Colonic mucosa (tissue), 4 donors: ENCODE measurements at regions of chr12 and their contacts with region 1.

Region 1: GRCh38 chr12:75505706-75506312 is 5.6 kb downstream of the KRR1 start:
- DNase-seq: no peak
- H3K4me3 ChIP-seq: no peak overlapping the region
- H3K27ac ChIP-seq: no peak overlapping the region
- H3K4me1 ChIP-seq: peaks cover 7% of the 10 kb centered on the region
- H3K27me3 ChIP-seq: no peaks in the 10 kb centered on the region
- CTCF ChIP-seq: peak; percentile 53

Region 2: GRCh38 chr12:75334384-75335030 is 171.3 kb before region 1 on chr12 and contains the start of gene GLIPR1L1:
- intact Hi-C with region 1: loop called (anchors 5 kb)
- DNase-seq: peak; percentile 86
- H3K4me3 ChIP-seq: peak within 1 kb of the TSS; percentile 14
- H3K27ac ChIP-seq: no peak within 1 kb of the TSS
- H3K4me1 ChIP-seq: no peaks in the 10 kb centered on the region
- H3K27me3 ChIP-seq: peaks cover 4% of the 10 kb centered on the region
- CTCF ChIP-seq: peak; percentile 82
- total RNA-seq, gene GLIPR1L1: not detected

Region 3: GRCh38 chr12:76356094-76356493 is 850.3 kb after region 1 on chr12:
- intact Hi-C with region 1: loop called (anchors 10 kb)
- DNase-seq: no peak
- H3K4me3 ChIP-seq: no peak overlapping the region
- H3K27ac ChIP-seq: no peak overlapping the region
- H3K4me1 ChIP-seq: no peaks in the 10 kb centered on the region
- H3K27me3 ChIP-seq: no peaks in the 10 kb centered on the region
- CTCF ChIP-seq: no peak

Region 4: GRCh38 chr12:76450690-76451089 is 944.9 kb after region 1 on chr12:
- intact Hi-C with region 1: no loop called
- DNase-seq: no peak
- H3K4me3 ChIP-seq: no peak overlapping the region
- H3K27ac ChIP-seq: no peak overlapping the region
- H3K4me1 ChIP-seq: no peaks in the 10 kb centered on the region
- H3K27me3 ChIP-seq: no peaks in the 10 kb centered on the region
- CTCF ChIP-seq: no peak